ENCODE measurements at regions of chr9 and their contacts with region 1.

Region 1: DNA sequence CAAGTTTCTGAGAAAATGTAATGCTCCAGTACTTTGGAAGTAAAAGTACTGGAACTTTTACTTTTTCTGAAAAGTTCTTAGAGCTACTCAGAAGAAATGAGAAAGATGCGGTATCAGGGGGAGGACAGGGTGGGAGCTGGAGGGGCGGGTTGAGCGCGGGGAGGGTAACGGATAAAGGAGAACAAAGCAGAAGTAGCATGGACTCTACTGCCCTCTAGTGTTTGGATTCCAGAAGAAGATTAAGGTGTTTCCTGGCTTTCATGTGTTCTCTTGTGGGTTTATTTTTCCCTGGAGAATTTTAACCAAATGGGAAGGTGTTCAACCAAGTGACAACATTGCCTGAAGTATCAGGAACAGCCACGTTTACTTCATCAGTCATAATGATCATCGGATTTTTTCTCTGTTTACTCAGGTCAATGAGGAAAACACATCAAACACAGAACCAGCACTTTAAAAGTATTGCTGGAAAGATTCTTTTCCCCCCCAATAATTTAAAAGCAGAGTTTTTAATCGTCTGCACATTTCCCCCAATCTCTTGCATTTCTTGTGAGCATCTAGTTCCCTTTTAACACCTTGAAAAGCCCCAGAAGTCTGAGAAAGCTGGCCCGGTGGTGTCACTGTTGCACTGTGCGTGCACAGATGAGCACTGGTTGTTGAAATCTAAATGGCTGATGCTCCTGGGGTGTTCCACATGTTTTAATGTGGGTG is 190.6 kb downstream of the MPDZ start:
- DNase-seq: no peak
- H3K4me3 ChIP-seq: no peak overlapping the region
- H3K27ac ChIP-seq: no peak overlapping the region
- H3K4me1 ChIP-seq: no peaks in the 10 kb centered on the region
- H3K27me3 ChIP-seq: no peaks in the 10 kb centered on the region
- CTCF ChIP-seq: peak; percentile 59

Region 2: GRCh38 chr9:12702160-12702758 is 386.6 kb before region 1 on chr9:
- intact Hi-C with region 1: loop called (anchors 5 kb)
- DNase-seq: peak; percentile 50
- H3K4me3 ChIP-seq: no peak overlapping the region
- H3K27ac ChIP-seq: no peak overlapping the region
- H3K4me1 ChIP-seq: no peaks in the 10 kb centered on the region
- H3K27me3 ChIP-seq: no peaks in the 10 kb centered on the region
- CTCF ChIP-seq: peak; percentile 56

Region 3: GRCh38 chr9:12723409-12724028 is 365.4 kb before region 1 on chr9:
- intact Hi-C with region 1: loop called (anchors 5 kb)
- DNase-seq: peak; percentile 21
- H3K4me3 ChIP-seq: no peak overlapping the region
- H3K27ac ChIP-seq: no peak overlapping the region
- H3K4me1 ChIP-seq: no peaks in the 10 kb centered on the region
- H3K27me3 ChIP-seq: no peaks in the 10 kb centered on the region
- CTCF ChIP-seq: peak; percentile 43

Region 4: DNA sequence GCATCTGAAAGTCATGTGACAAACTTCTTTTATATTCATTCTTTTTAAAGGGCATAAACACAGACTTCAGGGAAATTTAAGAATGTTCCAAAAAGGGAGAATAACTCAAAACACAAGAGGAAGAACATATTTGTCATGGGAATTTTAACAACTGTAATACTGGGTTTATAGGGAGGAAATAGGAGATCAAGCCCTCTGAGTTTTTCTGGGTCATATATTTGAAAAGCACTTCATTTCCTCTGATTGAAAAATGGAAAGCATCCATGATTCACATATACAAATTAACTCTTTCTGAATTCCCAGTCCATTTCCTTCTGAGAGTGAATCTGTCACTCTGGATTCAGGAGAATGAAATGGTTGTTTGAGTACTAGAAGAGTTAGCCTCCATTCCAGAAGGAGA is 287.2 kb before region 1 on chr9:
- intact Hi-C with region 1: no loop called
- DNase-seq: no peak
- H3K4me3 ChIP-seq: no peak overlapping the region
- H3K27ac ChIP-seq: no peak overlapping the region
- H3K4me1 ChIP-seq: peaks cover 3% of the 10 kb centered on the region
- H3K27me3 ChIP-seq: no peaks in the 10 kb centered on the region
- CTCF ChIP-seq: no peak

Region 5: GRCh38 chr9:12884737-12885414 is 204.0 kb before region 1 on chr9:
- intact Hi-C with region 1: loop called (anchors 5 kb)
- DNase-seq: no peak
- H3K4me3 ChIP-seq: no peak overlapping the region
- H3K27ac ChIP-seq: no peak overlapping the region
- H3K4me1 ChIP-seq: no peaks in the 10 kb centered on the region
- H3K27me3 ChIP-seq: no peaks in the 10 kb centered on the region
- CTCF ChIP-seq: peak; percentile 50

Region 6: DNA sequence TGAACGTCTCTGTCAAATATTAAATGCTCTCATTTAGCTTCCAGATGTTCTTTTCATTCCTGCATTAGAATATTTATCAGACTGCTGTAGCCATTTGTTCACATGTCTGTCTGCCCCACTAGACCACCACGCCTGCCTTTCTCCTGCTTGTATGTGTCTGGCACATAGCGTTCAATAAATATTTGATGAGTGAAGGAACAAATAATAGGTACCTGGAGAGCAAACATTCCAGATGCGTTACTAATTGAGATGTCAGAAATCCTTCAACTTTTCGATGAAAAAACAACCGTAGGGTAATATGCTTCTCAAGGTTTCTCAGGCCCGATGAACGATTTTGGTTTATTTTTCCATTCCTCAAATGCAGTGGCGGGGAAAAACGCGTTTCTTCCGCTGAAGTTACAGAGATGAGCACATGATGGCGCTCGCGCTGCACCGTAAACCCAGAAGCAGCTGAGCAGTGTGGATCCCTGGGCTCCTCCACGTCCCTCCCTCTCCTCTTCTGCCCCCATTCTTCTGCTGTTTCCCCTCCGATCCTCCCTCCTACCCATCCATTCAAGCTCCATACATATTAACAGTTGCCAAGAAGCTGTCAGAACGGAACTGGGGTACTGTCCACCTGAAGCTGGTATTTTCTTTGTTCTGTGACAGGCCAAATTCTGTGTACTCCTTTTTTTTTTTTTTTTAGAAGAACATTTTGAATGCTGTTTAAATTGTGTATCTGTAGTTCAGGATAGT is 54.7 kb before region 1 on chr9:
- intact Hi-C with region 1: loop called (anchors 2 kb)
- DNase-seq: peak; percentile 49
- H3K4me3 ChIP-seq: no peak overlapping the region
- H3K27ac ChIP-seq: no peak overlapping the region
- H3K4me1 ChIP-seq: no peaks in the 10 kb centered on the region
- H3K27me3 ChIP-seq: no peaks in the 10 kb centered on the region
- CTCF ChIP-seq: peak; percentile 52

Region 7: GRCh38 chr9:13151489-13151888 is 62.6 kb after region 1 on chr9:
- intact Hi-C with region 1: loop called (anchors 10 kb)
- DNase-seq: no peak
- H3K4me3 ChIP-seq: no peak overlapping the region
- H3K27ac ChIP-seq: no peak overlapping the region
- H3K4me1 ChIP-seq: no peaks in the 10 kb centered on the region
- H3K27me3 ChIP-seq: no peaks in the 10 kb centered on the region
- CTCF ChIP-seq: no peak

Measured in colonic mucosa (tissue), 4 donors.